KBM-7 (cell line): ENCODE measurements at regions of chr12 and their contacts with region 1.

Region 1: DNA sequence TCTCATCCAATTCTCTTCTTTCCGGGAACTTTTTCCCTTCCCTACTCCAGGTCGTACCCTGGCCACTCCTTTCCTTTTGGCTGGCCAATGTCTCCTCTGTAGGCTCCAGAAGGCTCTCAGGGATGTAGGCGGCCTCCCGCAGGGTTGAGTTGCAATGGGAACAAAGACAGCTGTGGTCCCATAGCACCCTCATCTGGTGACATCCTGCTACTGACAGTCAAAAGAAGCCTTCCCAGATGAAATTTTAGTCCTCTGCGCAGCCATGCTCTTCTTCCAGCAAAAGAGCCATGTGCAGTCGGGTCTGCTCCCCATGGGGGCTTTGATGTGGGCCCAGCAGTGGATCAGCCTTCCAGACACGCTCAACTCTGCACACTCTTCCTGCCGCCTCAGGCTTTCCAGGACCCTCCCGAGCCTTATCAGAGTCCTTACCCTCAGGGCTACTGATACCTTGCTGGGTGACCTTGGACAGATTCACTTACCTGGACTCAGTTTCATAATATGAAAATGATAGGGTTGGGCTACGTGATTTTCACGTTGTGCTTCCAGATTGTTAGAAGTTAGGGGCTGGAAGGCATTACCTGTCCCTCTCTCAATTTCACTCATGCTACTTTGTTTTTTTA is 5.5 kb upstream of the CELA1 start:
- DNase-seq: peak; percentile 82

Region 2: DNA sequence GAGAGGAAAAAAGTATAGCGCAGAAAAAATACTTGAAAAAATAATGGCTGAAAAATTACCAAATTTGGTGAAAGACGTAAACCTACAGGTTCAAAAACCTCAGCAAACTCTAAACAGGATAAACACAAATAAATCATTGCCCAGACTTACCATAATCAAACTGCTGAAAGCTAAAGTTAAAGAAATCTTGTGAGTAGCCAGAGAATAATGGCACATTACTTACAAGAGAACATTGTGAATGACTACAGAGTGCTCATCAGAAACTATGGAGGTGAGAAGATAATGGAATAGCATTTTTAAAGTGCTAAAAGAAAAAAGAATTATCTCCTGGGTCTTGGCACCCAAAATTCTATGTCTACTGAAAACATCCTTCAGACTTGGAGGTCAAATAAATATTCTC is 552.1 kb before region 1 on chr12:
- in situ Hi-C with region 1: loop called (anchors 25 kb)
- DNase-seq: no peak